GM10248 (cell line): ENCODE measurements at regions of chr15 and their contacts with region 1.

Region 1: DNA sequence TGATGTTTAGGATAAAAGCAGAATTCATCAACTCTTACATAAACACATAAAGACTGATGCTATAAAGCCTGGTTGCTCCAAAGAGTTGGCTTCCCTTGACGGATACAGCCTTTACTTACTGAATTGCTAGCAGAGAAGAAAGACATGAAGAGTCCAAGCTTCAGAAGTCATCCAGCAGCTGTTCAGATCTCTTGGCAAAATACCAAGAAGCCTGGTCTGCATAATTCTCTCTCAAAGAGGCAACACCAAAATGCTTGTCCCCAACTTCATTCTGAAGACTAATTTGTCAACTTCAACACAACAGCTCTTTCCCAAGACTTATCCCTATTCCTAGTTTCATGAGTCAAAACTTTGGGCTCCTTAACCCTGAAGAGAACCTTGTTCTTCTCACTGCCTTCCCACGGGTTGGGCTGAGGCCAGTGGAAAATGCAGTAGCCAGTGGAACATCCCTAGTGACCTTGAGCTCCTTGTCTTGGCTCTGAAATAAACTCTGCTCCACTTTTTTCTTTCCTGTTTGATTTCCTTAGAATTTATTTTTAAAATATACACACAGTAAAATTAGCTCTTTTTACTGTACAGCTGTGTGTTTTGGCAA is 119.2 kb upstream of the THBS1 start:
- DNase-seq: no peak
- CTCF ChIP-seq: no peak

Region 2: GRCh38 chr15:39396979-39397615 is 64.5 kb before region 1 on chr15:
- CTCF ChIA-PET with region 1: no interaction called
- POLR2A ChIA-PET with region 1: no interaction called
- DNase-seq: no peak
- CTCF ChIP-seq: no peak

Region 3: DNA sequence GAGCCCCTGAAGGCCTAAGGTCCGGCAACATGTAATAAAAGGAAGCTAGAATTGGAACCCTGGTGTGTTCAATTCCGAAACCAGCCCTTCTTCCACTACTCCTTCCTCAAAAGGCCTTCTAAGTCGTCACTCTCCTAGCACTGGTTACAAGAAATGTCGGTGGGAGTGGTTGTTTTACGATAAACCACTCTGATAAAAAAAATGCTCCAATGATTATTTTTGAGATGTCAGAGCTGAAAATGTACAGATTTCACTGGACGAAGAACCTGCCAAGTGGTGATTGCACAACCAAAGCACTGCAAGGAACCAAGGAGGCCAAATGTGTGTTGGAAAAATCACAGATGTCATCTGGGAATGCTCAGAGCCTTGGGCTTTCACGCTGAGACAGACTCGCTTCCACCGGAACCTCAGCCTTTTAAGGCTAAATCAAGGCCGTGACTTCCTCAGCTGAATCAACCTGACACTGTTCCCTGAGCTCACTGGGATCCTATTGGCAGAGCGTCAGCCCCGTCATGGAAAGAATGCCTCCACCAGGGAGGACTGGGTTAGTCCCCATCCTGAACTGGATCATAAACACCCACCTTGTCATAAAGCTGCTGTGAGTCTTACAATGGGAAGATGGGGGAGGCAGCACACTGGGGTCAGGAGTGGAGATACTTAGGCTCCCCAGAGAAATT is 11.1 kb after region 1 on chr15:
- CTCF ChIA-PET with region 1: interaction called, 16 read pairs
- POLR2A ChIA-PET with region 1: no interaction called
- DNase-seq: no peak
- CTCF ChIP-seq: no peak